ENCODE measurements at regions of chr5 and their contacts with region 1.

Region 1: GRCh38 chr5:40798012-40798855 is at the start of gene PRKAA1:
- DNase-seq: peak; percentile 69 to 96 (median 90)

Region 2: DNA sequence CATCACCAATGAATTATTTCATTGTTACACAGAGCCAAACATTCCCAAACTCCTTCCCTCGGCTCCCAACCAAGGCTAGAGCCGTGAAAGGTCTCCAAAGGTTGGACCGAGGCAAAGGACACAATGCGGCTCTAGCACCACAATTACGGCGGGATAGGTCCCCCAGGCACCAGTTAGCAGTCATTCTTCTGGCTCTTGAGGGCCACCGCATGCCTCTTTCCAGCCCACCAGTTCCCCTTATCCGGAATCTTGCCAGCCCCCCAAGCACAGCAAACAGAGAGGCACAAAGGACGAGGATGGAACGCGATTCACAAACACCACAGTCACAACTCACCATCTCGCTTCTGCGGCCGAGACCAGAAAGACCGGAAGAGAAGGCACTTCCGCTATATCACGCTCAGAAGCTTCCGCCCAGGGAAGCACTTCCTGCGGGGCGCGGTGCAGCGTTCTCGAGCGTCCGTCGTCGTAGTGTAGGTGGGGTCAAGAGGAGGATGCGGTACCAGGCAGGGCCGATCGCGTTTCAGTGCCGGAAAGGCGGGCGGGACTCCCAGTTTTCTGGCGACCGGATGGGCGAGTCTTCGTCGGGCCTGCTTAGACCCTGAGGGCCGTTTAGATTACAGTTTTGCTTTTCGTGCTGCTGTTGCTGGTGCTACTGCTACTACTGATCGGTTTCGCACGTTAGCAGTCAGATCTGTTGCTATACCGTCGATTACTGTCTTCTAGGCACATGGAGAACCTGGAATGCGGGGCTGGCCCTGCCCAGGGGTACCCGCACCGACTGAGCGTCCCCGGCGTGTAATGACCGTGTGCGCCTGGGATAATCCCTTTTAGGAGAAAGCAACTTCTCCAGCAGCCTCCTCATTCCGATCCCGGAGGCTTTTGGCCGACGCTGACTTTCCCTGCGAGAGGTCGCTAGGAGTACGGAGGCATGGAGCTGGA is 36.9 kb after region 1 on chr5 and contains the start of gene RPL37:
- intact Hi-C with region 1: loop called (anchors 1 kb)
- DNase-seq: peak; percentile 93 to 99 (median 96)

Region 3: DNA sequence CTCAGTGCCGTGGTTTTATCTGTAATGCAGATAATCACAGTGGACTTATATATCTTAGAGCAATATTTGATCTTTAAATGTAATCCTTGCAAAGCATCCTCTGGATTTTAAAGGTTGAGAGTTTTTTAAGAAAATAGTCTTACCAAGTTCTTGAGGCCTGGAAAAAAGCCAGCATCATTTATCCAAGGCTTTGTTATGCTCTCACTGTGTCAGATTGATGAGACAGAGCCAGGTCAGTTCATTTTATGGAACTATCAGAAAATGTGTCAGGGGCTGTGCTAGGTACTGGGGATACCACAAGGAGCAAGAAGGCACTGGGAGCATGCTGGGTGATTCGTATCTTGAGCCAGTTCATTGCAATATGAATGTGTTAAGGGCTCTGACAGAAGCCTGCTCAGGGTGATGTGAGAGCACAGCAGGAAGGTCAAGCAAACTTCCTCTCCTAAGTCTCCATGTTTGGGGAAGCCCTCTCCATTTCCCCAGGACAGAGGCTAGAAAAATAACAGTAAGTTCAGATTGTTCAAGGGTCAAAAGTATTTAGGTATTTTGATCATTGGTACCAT is 130.7 kb after region 1 on chr5:
- intact Hi-C with region 1: no loop called
- DNase-seq: no peak

Region 4: GRCh38 chr5:41067714-41068568 is 269.7 kb after region 1 on chr5:
- intact Hi-C with region 1: no loop called
- DNase-seq: no peak

Measured in head of caudate nucleus (tissue), 42 donors.